Adrenal gland (tissue), 19 donors: ENCODE measurements at regions of chr2 and their contacts with region 1.

Region 1: DNA sequence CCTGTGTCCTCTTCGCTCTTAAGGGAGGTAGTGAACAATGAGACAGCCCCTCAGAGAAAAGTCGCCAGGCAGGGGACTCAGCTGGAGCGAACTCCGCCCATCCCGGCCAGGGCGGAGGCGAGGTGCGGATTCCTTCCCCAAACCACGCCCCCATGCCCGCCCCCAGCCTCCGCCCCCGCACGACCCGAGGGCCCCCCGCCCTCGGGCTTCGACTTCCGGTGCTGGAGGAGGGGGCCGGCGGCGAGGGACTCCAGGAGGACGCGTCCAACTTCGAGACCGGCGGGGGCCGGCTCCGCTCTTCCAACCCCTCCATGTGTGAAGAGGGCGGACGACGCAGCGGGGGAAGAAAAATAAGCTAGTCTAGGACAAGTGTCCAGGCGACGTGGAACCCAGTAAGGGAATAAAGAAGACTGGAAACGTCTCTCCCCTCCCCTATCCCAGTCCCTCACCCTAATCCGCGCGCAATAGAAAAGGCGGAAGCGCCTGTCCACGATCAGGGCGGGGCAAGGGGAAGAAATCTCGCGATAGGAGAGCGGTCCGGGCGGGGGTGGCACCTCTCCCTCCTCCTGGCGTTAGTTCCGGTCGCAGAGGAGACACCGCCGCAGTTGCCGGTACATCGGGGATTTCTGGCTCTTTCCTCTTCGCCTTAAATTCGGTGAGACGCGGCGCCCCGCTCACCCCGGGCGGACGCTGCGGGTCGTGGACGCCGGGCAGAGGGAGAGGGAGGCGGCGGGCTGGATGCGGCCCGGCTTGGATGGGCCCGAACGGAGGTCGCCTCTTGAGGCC is at the start of gene BZW1:
- DNase-seq: peak; percentile 97 to 98 (median 98)
- H3K4me3 ChIP-seq: peak within 1 kb of the TSS; percentile 80 to 87 (median 84)
- H3K27ac ChIP-seq: peak within 1 kb of the TSS; percentile 95 to 99 (median 96)
- H3K4me1 ChIP-seq: peaks cover 5 to 47% of the 10 kb centered on the region in 2 donors
- H3K27me3 ChIP-seq: no peaks in the 10 kb centered on the region
- CTCF ChIP-seq: no peak
- POLR2A ChIP-seq: peak; percentile 96 to 97
- total RNA-seq, gene BZW1: 98.6 to 631 (median 218) TPM

Region 2: GRCh38 chr2:200713003-200713703 is 98.4 kb before region 1 on chr2:
- intact Hi-C with region 1: loop called in 1 of 2 experiments (anchors 10 kb)
- DNase-seq: peak; percentile 86 to 97 (median 94)
- H3K4me3 ChIP-seq: peak overlapping the region in 2 of 4 donors; percentile 6 to 48
- H3K27ac ChIP-seq: peak overlapping the region in 2 of 5 donors; percentile 77 to 81
- H3K4me1 ChIP-seq: peaks cover 0 to 4% of the 10 kb centered on the region in 2 donors
- H3K27me3 ChIP-seq: no peaks in the 10 kb centered on the region
- CTCF ChIP-seq: peak; percentile 68 to 87 (median 86)
- POLR2A ChIP-seq: peak; percentile 42 to 52

Region 3: GRCh38 chr2:200856806-200857205 is 45.3 kb after region 1 on chr2:
- intact Hi-C with region 1: loop called (anchors 5 kb)
- DNase-seq: no peak
- H3K4me3 ChIP-seq: no peak overlapping the region
- H3K27ac ChIP-seq: no peak overlapping the region
- H3K4me1 ChIP-seq: peaks cover 28 to 47% of the 10 kb centered on the region in 2 donors
- H3K27me3 ChIP-seq: no peaks in the 10 kb centered on the region
- CTCF ChIP-seq: no peak
- POLR2A ChIP-seq: no peak

Region 4: DNA sequence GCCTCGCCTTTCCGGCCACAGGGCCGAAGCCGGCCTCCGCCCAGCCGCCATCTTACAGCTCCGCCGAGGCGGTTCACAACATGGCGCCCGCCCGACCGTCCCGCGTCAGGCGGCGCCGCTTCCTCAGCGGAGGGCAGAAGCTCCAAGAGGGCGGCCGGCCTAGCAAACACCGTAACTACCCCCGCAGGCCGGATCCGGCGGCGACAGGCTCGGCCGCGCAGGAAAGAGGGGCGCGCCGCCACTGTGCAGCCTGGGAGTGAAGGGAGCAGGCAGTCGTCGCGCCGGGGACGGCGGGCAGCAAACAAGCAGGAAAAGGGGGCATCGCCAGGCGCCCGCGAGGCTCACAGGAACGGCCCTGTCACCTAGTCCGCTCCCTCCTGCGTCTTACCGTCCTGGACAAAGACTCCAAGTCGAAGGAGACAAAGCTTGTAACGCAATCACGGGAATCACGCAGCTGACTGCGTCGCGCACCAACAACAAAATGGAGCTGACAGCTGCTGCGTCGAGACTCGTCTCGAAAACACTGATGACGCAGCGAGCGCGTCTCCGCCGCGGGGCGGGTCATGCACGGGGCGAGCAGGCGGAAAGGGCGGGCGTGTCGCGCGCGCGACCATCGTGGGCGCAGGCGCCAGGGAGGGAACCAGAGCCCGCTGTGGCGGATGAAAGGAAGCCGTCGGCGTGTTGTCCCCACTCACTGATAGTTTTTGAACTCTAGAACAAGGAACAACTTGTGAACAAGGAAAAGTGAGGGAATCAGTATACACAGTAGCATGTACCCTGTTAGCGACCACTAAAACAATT is 52.8 kb after region 1 on chr2 and contains the start of gene CLK1:
- intact Hi-C with region 1: loop called (anchors 5 kb)
- DNase-seq: peak; percentile 96 to 99 (median 97)
- H3K4me3 ChIP-seq: peak within 1 kb of the TSS; percentile 62 to 95 (median 88)
- H3K27ac ChIP-seq: peak within 1 kb of the TSS; percentile 99 to 100 (median 100)
- H3K4me1 ChIP-seq: peaks cover 34 to 47% of the 10 kb centered on the region in 2 donors
- H3K27me3 ChIP-seq: no peaks in the 10 kb centered on the region
- CTCF ChIP-seq: peak in 1 of 6 experiments; percentile 7
- POLR2A ChIP-seq: peak; percentile 98 to 100
- total RNA-seq, gene CLK1: 34.4 to 151 (median 81.6) TPM